ENCODE measurements at regions of chr5 and their contacts with region 1.

Region 1: DNA sequence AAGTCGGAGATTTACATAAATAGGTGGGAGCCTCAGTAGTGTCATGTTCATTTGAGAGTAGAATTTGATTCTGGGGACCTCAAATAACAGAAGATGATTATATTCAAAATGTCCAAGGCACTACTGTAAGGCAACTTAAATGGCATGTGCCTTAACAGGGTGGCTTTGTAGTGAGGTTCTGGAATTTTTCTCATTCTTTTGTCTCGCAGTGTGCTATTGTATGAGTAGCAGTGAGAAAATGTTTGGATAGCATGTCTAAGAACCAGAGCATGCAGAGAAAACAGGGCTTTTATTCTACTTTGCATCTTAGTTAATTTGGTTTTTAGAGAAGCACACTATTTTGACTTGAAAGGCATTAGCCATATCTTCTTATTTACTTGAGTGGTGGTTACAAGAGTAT is 25.0 kb downstream of the MAST4 start:
- DNase-seq: no peak
- CTCF ChIP-seq: no peak

Region 2: GRCh38 chr5:66701244-66701643 is 80.1 kb after region 1 on chr5:
- in situ Hi-C with region 1: loop called (anchors 10 kb)
- DNase-seq: peak; percentile 23
- CTCF ChIP-seq: no peak